Cardiac septum (tissue), 1 donor: ENCODE measurements at regions of chr1 and their contacts with region 1.

Region 1: DNA sequence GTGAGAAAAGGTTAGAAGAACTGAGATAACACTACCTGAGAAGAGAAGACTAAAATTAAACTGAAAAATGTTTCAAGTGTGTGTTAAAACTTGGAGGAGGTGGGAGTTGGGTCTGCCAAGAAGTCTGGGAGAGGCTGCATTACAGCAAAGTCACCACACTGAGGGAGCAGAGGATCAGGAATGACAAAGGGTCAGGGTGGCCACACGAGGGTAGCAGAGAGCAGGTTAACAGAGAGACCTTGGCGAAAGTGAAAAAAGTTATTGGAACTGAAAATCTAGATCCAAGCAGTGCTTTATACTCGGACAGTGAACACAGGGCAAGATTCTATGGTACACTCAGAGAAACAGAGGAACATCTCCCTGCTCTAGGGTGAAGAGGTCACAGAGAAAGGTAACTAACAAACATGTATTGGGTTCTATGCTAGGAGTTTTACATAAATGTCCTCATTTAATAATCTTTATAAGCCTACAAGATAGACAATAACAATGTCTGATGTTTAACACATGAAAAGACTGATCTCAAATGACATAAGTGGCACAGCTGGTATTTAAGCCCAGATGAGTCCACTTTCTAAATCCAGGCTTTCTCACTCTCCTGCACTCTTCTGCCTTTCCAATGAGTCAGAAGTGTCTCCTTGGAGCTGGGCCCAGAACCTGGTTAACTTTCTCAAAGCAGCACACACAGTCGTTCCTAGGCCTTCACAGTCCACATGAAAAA is 10.3 kb upstream of the CADM3 start:
- DNase-seq: no peak

Region 2: DNA sequence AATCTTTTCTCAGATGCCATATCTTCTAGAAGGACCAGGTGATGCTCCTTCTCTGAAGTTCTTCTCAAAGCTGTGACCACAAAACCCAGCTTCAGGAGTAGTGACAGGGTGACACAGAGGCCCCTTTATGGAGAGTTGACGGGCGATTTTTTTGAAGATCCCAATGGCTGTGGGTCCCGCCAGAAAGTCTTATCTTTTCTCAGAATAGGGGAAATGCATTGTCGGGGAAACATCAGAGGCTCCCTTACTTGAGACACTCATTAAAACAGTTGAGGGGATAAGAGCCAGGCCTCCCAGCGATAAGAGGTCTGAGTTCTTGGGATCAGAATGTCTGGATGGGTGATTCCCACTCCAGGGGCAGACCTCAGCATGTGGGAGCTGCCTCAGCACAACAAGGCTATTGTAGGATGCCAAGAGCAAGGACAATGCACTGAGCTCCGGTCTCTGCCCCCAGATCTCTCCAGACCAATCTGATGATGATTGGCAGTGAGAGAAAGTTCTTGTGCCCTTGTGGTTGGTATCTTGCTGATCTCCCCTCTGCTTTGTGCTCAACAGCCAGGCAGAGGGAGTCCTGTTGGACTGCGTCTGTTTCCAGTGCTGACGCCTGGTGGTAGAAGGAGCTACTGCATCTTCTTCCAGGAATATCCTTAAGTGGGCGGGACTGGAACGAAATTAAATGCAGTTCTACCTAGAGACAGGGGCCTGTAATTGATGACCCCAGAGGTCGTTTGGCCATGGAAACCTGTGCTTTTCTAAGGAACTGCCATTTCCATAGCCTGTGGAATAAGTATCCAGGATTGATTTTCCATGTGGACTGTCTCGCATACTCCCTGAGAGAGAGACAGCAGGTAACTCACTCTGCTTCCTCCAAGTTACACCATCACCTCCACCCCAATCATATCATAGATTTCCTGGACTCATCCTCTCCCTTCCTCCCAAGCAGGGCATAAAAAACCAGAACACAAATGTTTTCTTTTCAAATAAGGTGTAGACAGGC is 36.7 kb after region 1 on chr1:
- intact Hi-C with region 1: loop called (anchors 5 kb)
- DNase-seq: no peak

Region 3: DNA sequence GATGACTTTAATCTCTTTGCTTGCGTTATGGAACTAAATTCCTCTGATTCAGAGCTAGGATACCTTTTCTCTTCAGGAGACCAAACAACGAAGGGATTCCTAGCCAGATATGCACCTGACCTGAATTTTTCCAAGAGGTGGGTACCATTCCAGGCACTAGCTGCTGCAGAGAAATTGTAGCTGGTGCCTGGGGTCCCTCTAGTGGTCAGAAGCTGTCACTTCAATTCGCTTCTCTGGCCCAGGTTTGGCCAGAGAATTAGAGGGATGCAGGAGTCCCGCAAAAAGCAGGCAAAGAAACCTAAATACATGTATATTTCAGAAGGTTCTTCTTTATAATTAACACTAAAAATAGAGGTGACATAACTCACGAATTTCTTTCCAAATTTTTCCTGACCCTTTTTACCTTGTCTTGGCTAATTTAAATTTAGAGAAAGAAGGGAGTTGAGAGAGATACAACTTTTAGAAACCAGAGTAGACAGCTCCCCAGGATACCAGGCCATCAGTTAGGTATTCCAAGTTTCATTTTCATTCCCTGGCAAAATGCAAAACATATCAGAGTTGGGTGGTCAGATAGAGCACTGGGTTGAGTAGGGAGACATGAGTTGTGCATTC is 53.1 kb after region 1 on chr1:
- intact Hi-C with region 1: loop called (anchors 1 kb)
- DNase-seq: no peak